ENCODE measurements at regions of chr3 and their contacts with region 1.

Region 1: DNA sequence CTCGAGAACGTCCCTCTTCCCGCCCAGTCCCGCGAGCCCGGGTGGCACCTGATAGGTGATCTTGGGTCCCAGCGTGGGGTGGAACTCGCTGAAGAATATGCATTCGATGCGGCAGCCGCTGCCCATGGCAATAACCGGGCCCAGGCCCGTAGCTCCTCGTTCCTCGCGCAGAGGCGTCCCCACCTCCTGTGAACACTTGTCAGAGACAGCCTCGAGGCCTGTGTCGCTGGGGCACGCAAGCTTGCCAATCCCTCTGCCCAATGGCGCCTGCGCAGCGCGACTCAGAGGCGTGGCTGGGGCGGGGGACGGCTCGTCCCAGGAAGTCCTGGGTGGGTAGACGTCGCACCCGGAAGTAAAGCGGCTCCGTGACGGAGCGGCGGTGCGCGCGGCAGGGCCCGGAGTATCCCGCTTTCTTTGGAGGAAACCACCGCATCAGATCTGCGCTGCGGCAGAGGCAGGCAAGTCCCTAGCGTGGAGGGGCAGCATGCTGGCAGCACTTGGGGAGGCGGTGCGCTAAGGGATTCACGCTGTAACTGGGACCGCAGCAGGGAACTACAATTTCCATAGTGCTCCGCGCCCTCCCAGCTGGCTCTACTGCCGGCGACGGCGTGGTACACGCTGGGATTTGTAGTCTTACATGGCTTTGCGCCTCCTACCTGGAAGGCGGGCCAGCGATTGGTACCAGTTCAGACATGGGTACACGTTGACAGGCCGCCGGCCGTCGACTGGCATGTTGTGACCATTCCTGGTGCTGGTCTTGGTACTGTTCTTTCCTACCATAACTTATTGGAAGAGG is at the starts of genes CYB561D2 and NPRL2:
- DNase-seq: peak; percentile 98
- ATAC-seq: peak; percentile 87
- H3K4me3 ChIP-seq: peak within 1 kb of the TSS; percentile 71 to 98 (median 91)
- H3K4me3 Mint-ChIP-seq: peak within 1 kb of the TSS; percentile 99
- H3K27ac ChIP-seq: peak within 1 kb of the TSS; percentile 85 to 93
- H3K27ac Mint-ChIP-seq: peak within 1 kb of the TSS; percentile 100
- H3K4me1 ChIP-seq: peaks cover 25 to 41% of the 10 kb centered on the region in 2 donors
- H3K4me1 Mint-ChIP-seq: peaks cover 52% of the 10 kb centered on the region
- H3K27me3 ChIP-seq: no peaks in the 10 kb centered on the region
- H3K27me3 Mint-ChIP-seq: no peaks in the 10 kb centered on the region
- CTCF ChIP-seq: no peak
- total RNA-seq, gene CYB561D2: 36.1 and 39.5 TPM in 2 replicates
- total RNA-seq, gene NPRL2: 29.6 and 31.3 TPM in 2 replicates

Region 2: DNA sequence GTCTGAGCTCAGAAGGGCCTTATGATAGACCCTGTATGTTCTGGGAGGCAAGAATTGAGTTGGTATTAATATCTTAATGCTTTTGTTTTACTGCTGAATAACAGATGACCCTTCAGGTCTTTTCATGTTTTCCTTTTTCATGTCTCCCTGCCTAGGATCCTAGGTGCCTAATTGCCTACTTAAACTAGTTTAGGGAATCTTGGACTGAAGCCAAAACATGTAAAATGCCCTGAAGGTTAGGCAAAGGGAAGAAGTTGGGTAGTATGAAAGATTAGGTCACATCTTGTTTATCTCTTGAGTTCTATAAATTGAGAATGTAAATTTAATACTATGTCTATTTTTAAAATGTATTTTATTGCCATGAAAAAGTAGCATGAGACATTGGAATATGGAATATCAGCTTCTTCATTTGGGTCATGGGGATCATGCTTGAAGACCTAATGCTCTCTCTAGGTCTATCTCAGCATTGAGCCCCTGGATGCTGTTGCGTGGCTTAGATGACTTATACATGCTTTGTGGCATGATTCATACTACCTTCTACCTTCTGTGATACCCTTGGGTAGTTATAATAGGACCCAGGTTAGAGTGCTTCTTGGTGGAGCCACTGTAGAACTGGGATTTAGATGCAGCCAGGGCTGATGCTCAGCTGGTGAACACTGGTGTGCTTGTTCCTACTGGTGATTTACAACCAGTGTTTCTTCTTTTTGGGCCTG is 384.3 kb before region 1 on chr3:
- CTCF ChIA-PET with region 1: no interaction called
- POLR2A ChIA-PET with region 1: no interaction called
- intact Hi-C with region 1: no loop called
- DNase-seq: no peak
- ATAC-seq: no peak
- H3K4me3 ChIP-seq: no peak overlapping the region
- H3K4me3 Mint-ChIP-seq: no peak overlapping the region
- H3K27ac ChIP-seq: no peak overlapping the region
- H3K27ac Mint-ChIP-seq: no peak overlapping the region
- H3K4me1 ChIP-seq: no peaks in the 10 kb centered on the region
- H3K4me1 Mint-ChIP-seq: peaks cover 10% of the 10 kb centered on the region
- H3K27me3 ChIP-seq: no peaks in the 10 kb centered on the region
- H3K27me3 Mint-ChIP-seq: no peaks in the 10 kb centered on the region
- CTCF ChIP-seq: no peak

Region 3: DNA sequence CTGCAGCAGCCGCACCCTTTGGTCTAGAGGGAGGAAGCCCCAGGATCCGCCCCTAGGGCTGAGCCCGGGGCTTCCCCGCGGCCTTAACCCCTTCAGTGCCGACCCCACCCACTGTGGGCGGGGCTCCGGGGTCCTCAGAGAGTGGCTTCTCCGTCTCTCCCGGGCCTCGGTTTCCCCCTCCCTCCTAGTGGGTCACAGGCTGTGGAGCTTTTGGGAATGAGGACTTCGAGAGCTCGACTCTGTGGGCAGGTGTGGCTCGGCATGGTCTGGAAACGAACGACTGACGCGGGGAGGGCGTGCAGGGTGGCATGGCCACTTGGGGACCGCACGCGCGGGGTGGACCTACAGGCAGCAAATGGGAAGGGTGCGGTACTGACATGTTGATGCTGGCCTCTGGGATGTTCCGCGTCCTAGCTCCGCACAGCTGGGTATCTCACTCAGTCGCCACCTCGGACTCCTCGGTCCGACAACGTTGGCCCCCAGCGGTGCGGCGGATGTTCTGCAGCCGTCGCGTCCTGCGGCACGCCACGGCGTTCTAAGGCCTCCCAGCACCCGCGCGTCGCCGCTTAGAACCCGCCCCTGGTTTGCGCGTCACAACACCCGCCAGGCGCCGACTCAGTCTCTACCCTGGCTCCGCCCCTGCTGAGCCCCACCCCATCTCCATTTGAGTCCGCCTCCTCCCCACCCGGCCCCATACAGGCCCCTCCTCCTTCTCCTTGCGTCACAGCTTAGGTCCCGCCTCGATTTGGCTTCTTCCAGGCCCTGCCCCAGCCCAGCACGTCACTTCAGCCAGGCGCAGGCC is 51.7 kb before region 1 on chr3 and contains the starts of genes HYAL3 and NAA80:
- CTCF ChIA-PET with region 1: interaction called, 14 read pairs
- POLR2A ChIA-PET with region 1: interaction called, 11 read pairs
- intact Hi-C with region 1: no loop called
- DNase-seq: peak; percentile 100
- ATAC-seq: peak; percentile 91
- H3K4me3 ChIP-seq: peak within 1 kb of the TSS; percentile 68 to 89 (median 88)
- H3K4me3 Mint-ChIP-seq: peak within 1 kb of the TSS; percentile 100
- H3K27ac ChIP-seq: peak within 1 kb of the TSS; percentile 77 to 84
- H3K27ac Mint-ChIP-seq: peak within 1 kb of the TSS; percentile 100
- H3K4me1 ChIP-seq: peaks cover 18 to 24% of the 10 kb centered on the region in 2 donors
- H3K4me1 Mint-ChIP-seq: peaks cover 33% of the 10 kb centered on the region
- H3K27me3 ChIP-seq: no peaks in the 10 kb centered on the region
- H3K27me3 Mint-ChIP-seq: no peaks in the 10 kb centered on the region
- CTCF ChIP-seq: peak; percentile 65
- total RNA-seq, gene HYAL3: 1.9 and 3.7 TPM in 2 replicates
- total RNA-seq, gene NAA80: 33.8 and 37.8 TPM in 2 replicates

Region 4: GRCh38 chr3:50314342-50314741 is 36.4 kb before region 1 on chr3:
- CTCF ChIA-PET with region 1: no interaction called
- POLR2A ChIA-PET with region 1: no interaction called
- intact Hi-C with region 1: no loop called
- DNase-seq: no peak
- ATAC-seq: no peak
- H3K4me3 ChIP-seq: no peak overlapping the region
- H3K4me3 Mint-ChIP-seq: no peak overlapping the region
- H3K27ac ChIP-seq: no peak overlapping the region
- H3K27ac Mint-ChIP-seq: no peak overlapping the region
- H3K4me1 ChIP-seq: peaks cover 12 to 32% of the 10 kb centered on the region in 2 donors
- H3K4me1 Mint-ChIP-seq: peaks cover 23% of the 10 kb centered on the region
- H3K27me3 ChIP-seq: no peaks in the 10 kb centered on the region
- H3K27me3 Mint-ChIP-seq: no peaks in the 10 kb centered on the region
- CTCF ChIP-seq: no peak

Region 5: DNA sequence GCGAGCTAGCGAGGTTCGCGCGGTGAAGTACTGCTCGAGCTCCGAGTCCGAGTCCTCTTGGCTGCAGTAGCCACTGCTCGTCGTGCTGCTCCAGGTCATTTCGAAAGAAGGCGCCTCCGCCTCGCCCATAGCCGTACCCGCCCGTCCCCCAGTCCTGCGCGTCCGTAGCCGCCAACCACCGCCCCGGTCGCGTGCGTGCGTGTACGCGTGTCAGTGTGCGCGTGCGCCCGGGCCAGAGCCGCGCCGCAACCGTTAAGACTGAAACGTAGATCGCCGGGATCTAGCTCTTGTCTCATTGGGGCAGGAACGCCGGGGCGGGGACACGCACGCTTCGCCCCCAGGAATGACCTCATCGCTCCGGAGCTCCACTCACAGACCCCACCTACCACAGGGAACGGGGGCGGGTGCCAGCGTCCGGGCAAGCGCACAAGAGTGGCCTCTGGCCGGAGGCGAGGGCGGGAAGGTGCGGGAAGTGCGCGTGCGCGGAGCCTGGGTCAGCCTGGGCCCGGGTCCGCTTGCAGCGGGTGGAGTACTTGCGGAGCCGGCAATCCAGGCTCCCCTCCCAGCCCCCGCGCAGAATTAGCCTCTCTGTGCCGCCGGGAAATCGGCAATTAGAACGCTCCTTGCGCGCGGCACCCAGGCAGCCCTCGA is 13.4 kb before region 1 on chr3:
- CTCF ChIA-PET with region 1: interaction called, 37 read pairs
- POLR2A ChIA-PET with region 1: interaction called, 96 read pairs
- intact Hi-C with region 1: loop called (anchors 1 kb)
- DNase-seq: peak; percentile 97
- ATAC-seq: peak; percentile 84
- H3K4me3 ChIP-seq: peak overlapping the region; percentile 39 to 86 (median 68)
- H3K4me3 Mint-ChIP-seq: peak overlapping the region; percentile 96
- H3K27ac ChIP-seq: peak overlapping the region; percentile 97 to 98
- H3K27ac Mint-ChIP-seq: peak overlapping the region; percentile 99
- H3K4me1 ChIP-seq: peaks cover 37 to 74% of the 10 kb centered on the region in 2 donors
- H3K4me1 Mint-ChIP-seq: peaks cover 55% of the 10 kb centered on the region
- H3K27me3 ChIP-seq: no peaks in the 10 kb centered on the region
- H3K27me3 Mint-ChIP-seq: no peaks in the 10 kb centered on the region
- CTCF ChIP-seq: no peak

Region 6: GRCh38 chr3:50542177-50543034 is 191.7 kb after region 1 on chr3:
- CTCF ChIA-PET with region 1: interaction called, 104 read pairs
- POLR2A ChIA-PET with region 1: interaction called, 3 read pairs
- intact Hi-C with region 1: no loop called
- DNase-seq: peak; percentile 73
- ATAC-seq: peak; percentile 71
- H3K4me3 ChIP-seq: no peak overlapping the region
- H3K4me3 Mint-ChIP-seq: no peak overlapping the region
- H3K27ac ChIP-seq: no peak overlapping the region
- H3K27ac Mint-ChIP-seq: no peak overlapping the region
- H3K4me1 ChIP-seq: no peaks in the 10 kb centered on the region
- H3K4me1 Mint-ChIP-seq: no peaks in the 10 kb centered on the region
- H3K27me3 ChIP-seq: peaks cover 0 to 16% (median 0%) of the 10 kb centered on the region in 4 experiments
- H3K27me3 Mint-ChIP-seq: peaks cover 18% of the 10 kb centered on the region
- CTCF ChIP-seq: peak; percentile 97

Measured in B cell (primary cell).